Aorta (tissue), 5 donors: ENCODE measurements at regions of chr1 and their contacts with region 1.

Region 1: GRCh38 chr1:206489980-206490770 is 17.2 kb upstream of the RASSF5 start:
- DNase-seq: peak; percentile 80 to 93
- ATAC-seq: peak; percentile 88
- H3K4me3 ChIP-seq: no peak overlapping the region
- H3K27ac ChIP-seq: no peak overlapping the region
- H3K4me1 ChIP-seq: no peaks in the 10 kb centered on the region
- H3K27me3 ChIP-seq: no peaks in the 10 kb centered on the region

Region 2: DNA sequence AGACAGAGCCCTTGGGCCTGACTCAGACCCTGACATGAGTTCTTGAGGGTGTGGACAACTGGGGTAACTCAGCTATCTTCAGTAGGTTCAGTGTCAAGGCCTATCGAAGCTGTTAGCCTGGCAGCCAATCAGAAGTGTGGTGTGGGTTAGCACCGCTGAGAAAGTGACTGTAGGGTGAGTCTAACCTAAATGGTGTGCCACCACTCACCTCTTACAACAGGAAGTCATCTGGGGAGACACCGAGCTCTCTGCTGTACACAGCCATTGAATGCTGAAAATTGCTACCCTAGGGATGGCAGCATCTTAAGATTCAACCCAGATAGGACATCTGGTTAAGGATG is 61.8 kb after region 1 on chr1:
- intact Hi-C with region 1: no loop called
- DNase-seq: no peak
- ATAC-seq: no peak
- H3K4me3 ChIP-seq: no peak overlapping the region
- H3K27ac ChIP-seq: no peak overlapping the region
- H3K4me1 ChIP-seq: no peaks in the 10 kb centered on the region
- H3K27me3 ChIP-seq: no peaks in the 10 kb centered on the region

Region 3: DNA sequence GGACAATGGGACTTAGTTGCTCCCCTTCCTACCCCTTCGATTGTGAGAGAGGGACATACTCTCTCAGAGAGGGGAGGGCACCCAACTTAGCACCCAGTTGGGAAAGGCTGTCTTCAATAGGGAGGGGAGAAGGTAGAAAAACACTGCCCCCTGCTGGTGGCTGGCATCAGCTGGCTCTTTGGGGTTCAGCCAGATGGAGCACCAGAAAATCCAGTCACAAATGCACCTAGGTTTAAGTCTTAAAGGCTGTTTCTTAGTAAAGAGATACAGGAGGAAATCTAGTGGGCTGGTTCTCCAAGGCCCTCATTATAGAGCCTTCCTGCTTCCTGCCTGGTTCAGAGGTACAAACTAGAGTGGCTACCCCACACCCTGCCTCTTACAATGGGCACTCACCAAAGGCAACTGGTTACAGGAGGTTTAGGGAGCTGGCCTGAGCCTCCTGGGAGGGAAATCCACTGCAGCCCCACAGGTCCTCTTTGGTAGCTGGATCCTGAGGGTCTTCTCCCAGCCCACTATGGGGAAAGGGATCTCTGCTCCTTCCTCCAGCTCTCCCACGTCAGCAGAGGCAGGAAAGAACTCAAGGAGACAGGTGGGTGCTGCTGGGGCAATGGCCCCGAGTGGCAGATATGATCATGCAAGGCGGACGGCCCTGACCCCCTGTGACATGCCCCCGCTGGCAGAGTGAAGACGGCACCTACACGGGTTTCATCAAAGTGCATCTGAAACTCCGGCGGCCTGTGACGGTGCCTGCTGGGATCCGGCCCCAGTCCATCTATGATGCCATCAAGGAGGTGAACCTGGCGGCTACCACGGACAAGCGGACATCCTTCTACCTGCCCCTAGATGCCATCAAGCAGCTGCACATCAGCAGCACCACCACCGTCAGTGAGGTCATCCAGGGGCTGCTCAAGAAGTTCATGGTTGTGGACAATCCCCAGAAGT is 93.8 kb after region 1 on chr1:
- intact Hi-C with region 1: loop called (anchors 1 to 2 kb)
- DNase-seq: peak; percentile 79 to 90
- ATAC-seq: peak; percentile 74
- H3K4me3 ChIP-seq: no peak overlapping the region
- H3K27ac ChIP-seq: no peak overlapping the region
- H3K4me1 ChIP-seq: no peaks in the 10 kb centered on the region
- H3K27me3 ChIP-seq: no peaks in the 10 kb centered on the region

Region 4: GRCh38 chr1:206663832-206664652 is 173.9 kb after region 1 on chr1:
- intact Hi-C with region 1: loop called in 1 of 2 experiments (anchors 10 kb)
- DNase-seq: peak in 1 of 2 donors; percentile 57
- ATAC-seq: peak; percentile 87
- H3K4me3 ChIP-seq: no peak overlapping the region
- H3K27ac ChIP-seq: no peak overlapping the region
- H3K4me1 ChIP-seq: no peaks in the 10 kb centered on the region
- H3K27me3 ChIP-seq: no peaks in the 10 kb centered on the region

Region 5: DNA sequence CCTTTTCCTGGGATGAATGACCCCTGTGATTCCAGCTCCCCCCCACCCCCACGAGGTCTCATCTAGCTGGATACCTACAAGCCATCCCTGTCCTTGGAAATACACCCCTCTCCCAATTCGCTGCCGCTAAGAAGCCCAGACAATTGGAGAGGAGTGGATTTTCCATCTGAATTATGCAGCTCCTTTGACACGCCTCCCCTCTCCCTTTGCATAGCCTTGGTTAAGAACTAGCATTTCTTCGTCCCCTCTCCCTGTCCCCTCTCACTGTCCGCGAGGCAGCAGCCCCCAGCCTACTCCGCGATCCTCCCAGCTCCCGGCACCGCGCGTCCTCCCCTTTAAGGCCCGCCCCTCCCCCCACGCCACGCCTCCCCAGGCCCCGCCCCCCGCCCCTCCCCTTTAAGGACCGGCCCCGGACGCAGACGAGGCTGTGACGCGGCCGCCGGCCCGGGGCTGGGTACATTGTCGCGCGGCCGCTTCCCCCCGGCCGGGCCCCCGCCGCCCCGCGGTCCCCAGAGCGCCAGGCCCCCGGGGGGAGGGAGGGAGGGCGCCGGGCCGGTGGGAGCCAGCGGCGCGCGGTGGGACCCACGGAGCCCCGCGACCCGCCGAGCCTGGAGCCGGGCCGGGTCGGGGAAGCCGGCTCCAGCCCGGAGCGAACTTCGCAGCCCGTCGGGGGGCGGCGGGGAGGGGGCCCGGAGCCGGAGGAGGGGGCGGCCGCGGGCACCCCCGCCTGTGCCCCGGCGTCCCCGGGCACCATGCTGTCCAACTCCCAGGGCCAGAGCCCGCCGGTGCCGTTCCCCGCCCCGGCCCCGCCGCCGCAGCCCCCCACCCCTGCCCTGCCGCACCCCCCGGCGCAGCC is 194.5 kb after region 1 on chr1 and contains the start of gene MAPKAPK2:
- intact Hi-C with region 1: loop called in 1 of 2 experiments (anchors 10 kb)
- DNase-seq: peak; percentile 84 to 93
- ATAC-seq: peak; percentile 87
- H3K4me3 ChIP-seq: peak within 1 kb of the TSS; percentile 99 to 100
- H3K27ac ChIP-seq: peak within 1 kb of the TSS; percentile 100
- H3K4me1 ChIP-seq: peaks cover 6 to 16% of the 10 kb centered on the region in 2 donors
- H3K27me3 ChIP-seq: no peaks in the 10 kb centered on the region
- total RNA-seq, gene MAPKAPK2: 81.3 to 117 TPM